GM12878 (cell line): ENCODE measurements at regions of chr10 and their contacts with region 1.

Region 1: DNA sequence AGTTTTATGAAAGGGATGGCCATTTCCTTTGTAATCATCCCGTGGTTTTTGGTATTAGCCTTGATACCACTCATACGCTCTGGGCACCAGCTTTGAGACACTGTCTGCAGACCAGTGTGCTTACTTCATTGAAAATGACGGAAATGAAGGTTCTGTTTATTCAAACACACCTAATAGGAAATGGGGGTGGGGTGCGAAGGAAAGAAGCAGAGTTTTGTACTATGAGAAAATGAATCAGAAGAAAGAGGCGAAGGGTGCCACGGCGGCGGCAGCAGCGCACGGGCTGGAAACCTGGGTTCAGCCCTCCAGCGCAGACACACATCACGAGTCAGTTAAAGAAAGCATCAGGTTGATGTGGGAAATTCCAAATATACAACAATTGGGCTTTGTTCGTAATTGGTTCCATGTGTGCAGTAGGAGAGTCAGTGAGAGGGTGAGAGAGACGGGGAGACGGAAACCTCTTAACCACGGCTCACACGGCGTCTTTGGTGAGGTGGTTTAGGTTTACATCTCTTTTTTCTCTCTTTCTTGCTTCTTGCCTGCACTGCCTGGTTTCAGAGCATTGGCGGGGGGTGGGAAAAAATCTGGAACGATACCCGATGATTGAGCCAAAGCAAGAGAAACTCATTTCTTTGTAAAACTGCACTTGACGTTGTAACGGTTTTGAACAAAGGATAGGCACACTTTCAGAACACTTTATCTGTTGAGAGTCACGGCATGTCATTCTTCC is 321.2 kb downstream of the FRMD4A start:
- DNase-seq: peak; percentile 96
- ATAC-seq: peak; percentile 75
- H3K4me3 ChIP-seq: peak overlapping the region; percentile 25; the same call in 1 of the 2 replicates
- H3K27ac ChIP-seq: peak overlapping the region; percentile 72
- H3K4me1 ChIP-seq: peaks cover 11% of the 10 kb centered on the region
- H3K27me3 ChIP-seq: peaks cover 0 to 3% of the 10 kb centered on the region in 2 experiments; a peak in 1 of 4 replicates
- CTCF ChIP-seq: no peak
- EP300 ChIP-seq: peak; percentile 49 to 84; a peak in 3 of 4 replicates
- POLR2A ChIP-seq: no peak
- RAD21 ChIP-seq: no peak

Region 2: DNA sequence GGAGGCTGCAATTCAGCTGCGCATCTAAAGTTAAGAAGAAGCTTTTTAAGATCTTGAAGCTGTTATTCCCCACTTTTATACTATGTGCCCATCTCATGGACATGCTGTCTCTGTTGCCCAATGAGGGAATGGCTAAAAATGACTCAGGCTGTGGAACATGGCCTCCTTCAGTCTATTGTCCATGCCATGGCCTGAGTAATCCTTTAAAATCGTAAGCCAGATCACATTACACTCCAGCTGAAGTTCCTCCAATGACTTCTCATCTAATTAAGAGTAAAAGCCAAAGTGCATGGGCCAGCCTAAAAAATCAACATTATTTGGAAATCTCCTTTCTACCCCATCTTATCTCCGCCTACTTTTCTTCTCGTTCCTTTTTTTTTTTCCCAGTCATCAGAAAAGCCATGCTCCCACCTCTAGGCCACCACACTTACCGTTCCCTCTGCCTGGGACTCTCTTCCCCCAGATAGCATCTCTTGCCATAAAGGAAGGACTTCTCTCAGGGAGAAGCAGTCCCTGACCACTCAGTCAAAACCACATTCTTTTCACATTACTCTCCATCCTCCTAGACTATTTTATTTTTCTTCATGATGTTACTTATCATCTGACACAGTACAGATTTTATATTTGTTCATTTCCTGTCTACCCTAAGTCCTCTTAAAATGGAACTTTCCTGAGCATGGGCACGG is 85.4 kb before region 1 on chr10:
- CTCF ChIA-PET with region 1: no interaction called
- POLR2A ChIA-PET with region 1: interaction called, 4 read pairs
- RAD21 ChIA-PET with region 1: interaction called, 3 read pairs
- SMC1A ChIA-PET with region 1: interaction called, 3 read pairs
- in situ Hi-C with region 1: no loop called
- intact Hi-C with region 1: loop called (anchors 5 kb)
- DNase-seq: no peak
- ATAC-seq: no peak
- H3K4me3 ChIP-seq: no peak overlapping the region
- H3K27ac ChIP-seq: no peak overlapping the region
- H3K4me1 ChIP-seq: peaks cover 22% of the 10 kb centered on the region
- H3K27me3 ChIP-seq: no peaks in the 10 kb centered on the region
- CTCF ChIP-seq: no peak
- EP300 ChIP-seq: no peak
- POLR2A ChIP-seq: no peak
- RAD21 ChIP-seq: no peak

Region 3: GRCh38 chr10:14024329-14025202 is 15.0 kb after region 1 on chr10:
- CTCF ChIA-PET with region 1: interaction called, 4 read pairs
- POLR2A ChIA-PET with region 1: interaction called, 7 read pairs
- RAD21 ChIA-PET with region 1: interaction called, 11 read pairs
- SMC1A ChIA-PET with region 1: interaction called, 70 read pairs
- in situ Hi-C with region 1: no loop called
- intact Hi-C with region 1: loop called (anchors 1 kb)
- DNase-seq: no peak
- ATAC-seq: peak; percentile 54
- H3K4me3 ChIP-seq: peak overlapping the region; percentile 48; the same call in 1 of the 2 replicates
- H3K27ac ChIP-seq: peak overlapping the region; percentile 57
- H3K4me1 ChIP-seq: no peaks in the 10 kb centered on the region; the same call in 1 of the 2 replicates
- H3K27me3 ChIP-seq: no peaks in the 10 kb centered on the region; a peak in 2 of 4 replicates
- CTCF ChIP-seq: no peak
- EP300 ChIP-seq: no peak
- POLR2A ChIP-seq: no peak
- RAD21 ChIP-seq: no peak

Region 4: DNA sequence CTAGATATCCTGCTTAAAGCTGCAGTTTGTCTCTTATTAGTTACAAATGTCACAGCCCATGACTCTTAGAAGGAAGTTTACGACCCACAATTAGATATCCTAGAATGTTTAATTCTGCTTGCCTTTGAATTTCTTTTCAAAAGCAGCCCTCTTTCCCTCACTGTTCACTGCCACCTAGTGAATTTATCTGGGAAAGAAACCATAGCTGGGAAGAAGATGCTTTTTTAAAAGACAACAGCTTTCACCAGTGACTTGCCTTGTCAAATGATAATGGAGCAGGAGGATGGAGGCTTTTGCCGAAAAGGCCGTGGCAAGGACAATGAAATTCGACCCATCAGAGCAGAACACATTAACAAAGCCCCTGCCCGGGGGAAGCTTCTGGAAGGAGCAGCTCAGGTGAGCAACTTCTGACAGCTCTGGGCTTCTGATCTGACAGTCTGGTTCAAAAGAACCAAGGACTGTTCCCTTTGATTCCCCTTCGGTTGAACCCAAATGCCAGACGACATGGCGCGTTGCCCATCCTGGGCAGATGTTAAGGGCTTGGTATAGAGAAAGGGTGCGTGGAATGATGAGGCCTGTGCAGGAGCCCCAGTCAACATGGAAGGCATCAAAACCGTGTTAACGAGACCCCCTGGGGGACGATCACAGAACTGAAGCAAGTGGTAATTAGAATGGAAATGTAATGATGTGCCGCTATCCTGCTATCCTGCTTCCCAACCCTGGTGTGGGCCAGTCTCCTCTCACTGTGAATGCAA is 84.4 kb after region 1 on chr10:
- CTCF ChIA-PET with region 1: interaction called, 4 read pairs
- POLR2A ChIA-PET with region 1: no interaction called
- RAD21 ChIA-PET with region 1: interaction called, 4 read pairs
- SMC1A ChIA-PET with region 1: interaction called, 3 read pairs
- in situ Hi-C with region 1: no loop called
- intact Hi-C with region 1: loop called (anchors 5 kb)
- DNase-seq: no peak
- ATAC-seq: peak; percentile 51; the same call in 1 of the 3 replicates
- H3K4me3 ChIP-seq: no peak overlapping the region
- H3K27ac ChIP-seq: no peak overlapping the region
- H3K4me1 ChIP-seq: no peaks in the 10 kb centered on the region
- H3K27me3 ChIP-seq: no peaks in the 10 kb centered on the region
- CTCF ChIP-seq: peak in 2 of 3 experiments; percentile 32 to 46; a peak in 3 of 6 replicates
- EP300 ChIP-seq: no peak
- POLR2A ChIP-seq: no peak
- RAD21 ChIP-seq: peak; percentile 47

Region 5: DNA sequence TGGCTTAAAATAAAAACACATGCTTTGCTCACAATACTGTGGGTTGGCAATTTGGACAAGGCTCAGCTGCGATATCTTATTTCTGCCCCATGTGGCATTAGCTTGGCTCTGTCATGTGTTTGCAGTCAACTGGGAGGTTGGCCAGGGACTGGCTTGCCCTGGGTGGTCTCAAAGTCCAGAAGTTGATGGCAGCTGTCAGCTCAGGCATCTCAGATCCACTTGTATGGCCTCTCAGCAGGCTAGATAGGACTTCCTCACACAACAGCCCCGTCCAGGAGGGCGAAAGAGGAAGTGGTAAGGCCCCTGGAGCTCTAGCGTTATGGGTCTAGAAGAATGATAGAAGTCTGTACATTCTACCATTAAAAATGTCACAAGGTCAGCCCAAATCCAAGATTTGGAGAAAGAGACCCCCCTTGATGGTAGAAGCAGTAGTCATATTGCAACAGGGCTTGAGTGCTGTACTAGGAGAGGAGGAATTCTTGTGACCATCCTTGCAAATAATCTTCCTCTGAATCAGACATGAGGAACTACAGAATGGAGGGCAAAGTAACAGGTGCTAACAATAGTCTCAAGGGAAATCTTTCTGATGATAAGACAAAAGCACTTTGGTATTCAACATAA is 599.0 kb after region 1 on chr10:
- CTCF ChIA-PET with region 1: no interaction called
- POLR2A ChIA-PET with region 1: no interaction called
- RAD21 ChIA-PET with region 1: no interaction called
- SMC1A ChIA-PET with region 1: no interaction called
- in situ Hi-C with region 1: no loop called
- intact Hi-C with region 1: no loop called
- DNase-seq: no peak
- ATAC-seq: peak; percentile 63
- H3K4me3 ChIP-seq: no peak overlapping the region
- H3K27ac ChIP-seq: no peak overlapping the region
- H3K4me1 ChIP-seq: peaks cover 28% of the 10 kb centered on the region
- H3K27me3 ChIP-seq: no peaks in the 10 kb centered on the region
- CTCF ChIP-seq: no peak
- EP300 ChIP-seq: 0 out of 4 replicates have a peak, but pooled peaks of 1 of the 2 experiments have one; percentile 18
- POLR2A ChIP-seq: no peak
- RAD21 ChIP-seq: no peak